ENCODE measurements at regions of chr1 and their contacts with region 1.

Region 1: DNA sequence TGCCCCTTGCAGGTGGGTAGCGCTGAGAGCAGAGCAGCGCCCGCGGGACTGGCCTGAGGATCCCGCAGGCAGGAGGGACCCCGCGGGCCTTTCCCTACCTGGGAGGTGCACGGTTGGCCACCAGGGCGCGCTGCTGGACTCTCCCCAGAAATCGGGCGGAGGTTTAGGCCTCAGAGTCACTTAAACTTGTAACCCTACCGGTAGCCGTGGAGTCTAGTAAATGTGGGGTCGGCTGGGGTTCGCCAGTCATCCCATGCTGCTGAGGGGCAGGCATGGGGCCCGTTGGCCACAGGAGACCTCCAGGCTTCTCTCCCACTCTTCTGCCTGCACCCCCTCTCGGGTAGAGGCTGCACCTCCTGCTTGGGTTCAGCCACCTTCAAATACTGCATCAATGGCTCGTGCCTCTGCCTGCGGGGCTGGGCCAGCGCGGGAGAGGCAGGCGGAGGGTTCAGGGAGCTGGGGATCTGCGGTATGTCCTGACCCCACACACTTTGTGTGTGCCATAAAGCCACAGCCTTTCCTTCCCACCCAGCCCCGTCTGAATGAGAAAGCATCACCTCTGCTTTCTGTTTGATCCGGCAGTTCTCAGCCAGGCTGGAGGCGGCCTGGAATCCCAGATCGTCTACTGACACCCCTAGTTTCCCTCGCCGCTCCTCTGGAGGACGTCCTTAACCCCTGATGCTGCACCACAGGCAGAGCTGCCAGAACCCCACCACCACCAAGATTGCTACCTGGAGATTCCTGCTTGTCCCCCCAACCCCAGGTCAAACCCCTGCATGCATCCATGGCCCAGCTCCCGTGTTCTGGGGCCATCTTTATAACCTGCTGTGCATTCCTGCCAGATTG is 12.3 kb upstream of the GSTM4 start:
- ATAC-seq: peak; percentile 85 to 94 (median 90)
- H3K4me3 ChIP-seq: no peak overlapping the region
- H3K27ac ChIP-seq: no peak overlapping the region
- H3K4me1 ChIP-seq: peaks cover 0 to 3% of the 10 kb centered on the region in 2 donors

Region 2: GRCh38 chr1:109739738-109740660 is 96.4 kb after region 1 on chr1:
- in situ Hi-C with region 1: loop called in 1 of 9 experiments (anchors 25 kb)
- ATAC-seq: peak; percentile 91 to 94 (median 93)
- H3K4me3 ChIP-seq: peak overlapping the region; percentile 52 to 73 (median 54)
- H3K27ac ChIP-seq: peak overlapping the region; percentile 59 to 64
- H3K4me1 ChIP-seq: peaks cover 7 to 9% of the 10 kb centered on the region in 2 donors